Spleen (tissue), 13 donors: ENCODE measurements at regions of chr19 and their contacts with region 1.

Region 1: DNA sequence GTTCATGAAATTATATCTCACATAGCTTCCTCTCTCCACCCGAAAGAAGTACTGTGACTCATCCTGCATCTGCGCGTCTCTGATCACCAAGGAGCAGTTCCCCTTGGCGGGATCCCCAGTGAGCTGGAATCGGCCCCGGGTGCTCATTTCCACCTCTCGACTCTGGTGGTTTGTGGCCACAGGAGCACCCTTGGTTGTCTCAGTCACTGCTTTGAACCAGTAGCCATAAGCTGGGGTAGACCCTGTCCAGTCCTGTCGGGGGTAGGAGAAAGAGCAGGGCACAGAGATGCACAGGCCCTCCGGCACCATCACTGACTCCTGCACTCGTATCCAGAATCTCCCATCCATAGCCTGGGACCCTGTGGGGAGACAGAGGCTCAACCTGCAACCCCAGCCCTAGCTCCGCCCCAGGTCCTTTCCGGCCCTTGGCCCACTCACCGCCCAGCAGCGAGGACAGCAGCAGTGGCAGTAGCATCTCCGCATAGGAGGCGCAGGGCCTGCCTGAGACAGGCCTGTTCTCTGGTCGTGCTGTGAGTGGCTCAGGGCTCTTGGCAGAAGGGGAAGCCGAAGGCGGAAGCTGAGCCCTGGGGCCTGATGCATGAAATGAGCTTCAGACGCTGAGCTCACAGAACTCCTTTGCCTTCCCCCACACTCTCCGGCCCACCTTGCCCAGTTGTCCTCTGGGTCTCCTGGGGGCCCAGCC is at the start of gene SIGLEC10:
- DNase-seq: peak; percentile 95
- H3K4me3 ChIP-seq: peak within 1 kb of the TSS; percentile 6 to 74 (median 40)
- H3K27ac ChIP-seq: peak within 1 kb of the TSS; percentile 63 to 95 (median 83)
- H3K4me1 ChIP-seq: peaks cover 3 to 78% (median 39%) of the 10 kb centered on the region in 6 donors
- H3K27me3 ChIP-seq: peaks cover 0 to 26% (median 9%) of the 10 kb centered on the region in 7 donors
- CTCF ChIP-seq: peak in 1 of 11 experiments; percentile 18
- POLR2A ChIP-seq: peak in 1 of 3 donors; percentile 41
- total RNA-seq, gene SIGLEC10: 68.9 to 155 (median 102) TPM

Region 2: GRCh38 chr19:51327066-51328001 is 89.9 kb before region 1 on chr19:
- intact Hi-C with region 1: no loop called
- DNase-seq: peak; percentile 71
- H3K4me3 ChIP-seq: peak overlapping the region in 5 of 8 donors; percentile 1 to 53 (median 19)
- H3K27ac ChIP-seq: no peak overlapping the region
- H3K4me1 ChIP-seq: peaks cover 0 to 21% (median 14%) of the 10 kb centered on the region in 6 donors
- H3K27me3 ChIP-seq: peaks cover 8 to 82% (median 43%) of the 10 kb centered on the region in 7 donors
- CTCF ChIP-seq: peak in 2 of 11 experiments; percentile 28 to 33
- POLR2A ChIP-seq: no peak

Region 3: GRCh38 chr19:51651216-51651846 is 234.1 kb after region 1 on chr19:
- intact Hi-C with region 1: loop called (anchors 10 kb)
- DNase-seq: no peak
- H3K4me3 ChIP-seq: peak overlapping the region in 1 of 8 donors; percentile 38
- H3K27ac ChIP-seq: peak overlapping the region in 7 of 8 donors; percentile 49 to 84 (median 74)
- H3K4me1 ChIP-seq: peaks cover 0 to 72% (median 28%) of the 10 kb centered on the region in 6 donors
- H3K27me3 ChIP-seq: no peaks in the 10 kb centered on the region
- CTCF ChIP-seq: no peak
- POLR2A ChIP-seq: no peak